Mucosa of descending colon (tissue), 3 donors: ENCODE measurements at regions of chr12 and their contacts with region 1.

Region 1: DNA sequence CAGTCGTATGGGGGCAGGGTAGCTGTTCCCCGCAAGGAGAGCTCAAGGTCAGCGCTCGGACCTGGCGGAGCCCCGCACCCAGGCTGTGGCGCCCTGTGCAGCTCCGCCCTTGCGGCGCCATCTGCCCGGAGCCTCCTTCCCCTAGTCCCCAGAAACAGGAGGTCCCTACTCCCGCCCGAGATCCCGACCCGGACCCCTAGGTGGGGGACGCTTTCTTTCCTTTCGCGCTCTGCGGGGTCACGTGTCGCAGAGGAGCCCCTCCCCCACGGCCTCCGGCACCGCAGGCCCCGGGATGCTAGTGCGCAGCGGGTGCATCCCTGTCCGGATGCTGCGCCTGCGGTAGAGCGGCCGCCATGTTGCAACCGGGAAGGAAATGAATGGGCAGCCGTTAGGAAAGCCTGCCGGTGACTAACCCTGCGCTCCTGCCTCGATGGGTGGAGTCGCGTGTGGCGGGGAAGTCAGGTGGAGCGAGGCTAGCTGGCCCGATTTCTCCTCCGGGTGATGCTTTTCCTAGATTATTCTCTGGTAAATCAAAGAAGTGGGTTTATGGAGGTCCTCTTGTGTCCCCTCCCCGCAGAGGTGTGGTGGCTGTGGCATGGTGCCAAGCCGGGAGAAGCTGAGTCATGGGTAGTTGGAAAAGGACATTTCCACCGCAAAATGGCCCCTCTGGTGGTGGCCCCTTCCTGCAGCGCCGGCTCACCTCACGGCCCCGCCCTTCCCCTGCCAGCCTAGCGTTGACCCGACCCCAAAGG is 804 bp downstream of the GAPDH start:
- DNase-seq: peak; percentile 76 to 91 (median 83)
- ATAC-seq: peak; percentile 37
- H3K4me3 ChIP-seq: peak overlapping the region; percentile 86
- H3K4me1 ChIP-seq: peaks cover 46% of the 10 kb centered on the region
- CTCF ChIP-seq: no peak

Region 2: DNA sequence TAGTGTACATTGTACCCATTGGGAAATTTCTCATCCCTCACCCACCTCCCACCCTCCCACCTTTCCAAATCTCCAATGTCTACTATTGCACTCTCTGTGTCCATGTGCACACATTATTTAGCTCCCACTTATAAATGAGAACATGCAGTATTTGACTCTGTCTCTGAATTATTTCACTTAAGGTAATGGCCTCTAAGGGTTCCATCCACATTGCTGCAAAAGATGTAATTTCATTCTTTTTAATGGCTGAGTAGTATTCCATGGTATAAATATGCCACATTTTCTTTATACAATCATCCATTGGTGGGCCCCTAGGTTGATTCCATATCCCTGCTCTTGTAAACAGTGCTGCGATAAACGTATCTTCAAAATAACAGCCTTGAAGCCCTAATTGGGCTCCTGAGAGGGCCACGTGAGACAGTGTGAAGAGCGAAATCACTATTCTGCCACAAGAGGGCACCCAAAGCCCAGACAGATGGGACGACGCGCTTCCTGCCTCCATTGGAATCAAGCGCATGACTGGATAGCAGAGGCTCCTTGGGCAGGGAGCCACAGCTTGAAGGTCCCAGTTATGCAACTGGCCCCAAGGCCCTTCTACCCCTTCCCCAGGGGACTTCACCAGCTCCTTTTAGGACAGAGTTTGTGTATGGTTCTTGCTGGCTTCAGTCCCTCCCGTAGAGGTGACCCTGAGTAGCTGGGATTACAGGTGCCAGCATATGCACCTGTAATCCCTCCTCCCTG is 111.7 kb before region 1 on chr12:
- intact Hi-C with region 1: loop called in 1 of 2 experiments (anchors 5 kb)
- DNase-seq: peak; percentile 79 to 87 (median 81)
- ATAC-seq: peak; percentile 98
- H3K4me3 ChIP-seq: no peak overlapping the region
- H3K4me1 ChIP-seq: peaks cover 11% of the 10 kb centered on the region
- CTCF ChIP-seq: peak; percentile 76

Region 3: GRCh38 chr12:6493497-6494257 is 41.4 kb before region 1 on chr12 and contains the start of gene NCAPD2:
- intact Hi-C with region 1: loop called in 1 of 2 experiments (anchors 5 kb)
- DNase-seq: peak; percentile 95 to 97 (median 96)
- ATAC-seq: peak; percentile 94
- H3K4me3 ChIP-seq: peak within 1 kb of the TSS; percentile 48
- H3K4me1 ChIP-seq: peaks cover 19% of the 10 kb centered on the region
- CTCF ChIP-seq: peak; percentile 33
- total RNA-seq, gene NCAPD2: 25.5 to 47.0 (median 26.0) TPM